ENCODE measurements at regions of chr17 and their contacts with region 1.

Region 1: GRCh38 chr17:30104575-30105339 is 11.9 kb upstream of the NSRP1 start:
- DNase-seq: peak; percentile 87 to 94 (median 94)
- H3K4me3 ChIP-seq: peak overlapping the region; percentile 20 to 87 (median 61)
- H3K27ac ChIP-seq: peak overlapping the region in 1 of 2 experiments; percentile 41
- H3K4me1 ChIP-seq: peaks cover 0 to 7% (median 3%) of the 10 kb centered on the region in 4 experiments
- H3K27me3 ChIP-seq: no peaks in the 10 kb centered on the region

Region 2: GRCh38 chr17:30093463-30094147 is 11.2 kb before region 1 on chr17:
- CTCF ChIA-PET with region 1: interaction called, 81 read pairs
- POLR2A ChIA-PET with region 1: no interaction called
- DNase-seq: peak; percentile 44 to 61 (median 49)
- H3K4me3 ChIP-seq: no peak overlapping the region
- H3K27ac ChIP-seq: no peak overlapping the region
- H3K4me1 ChIP-seq: peaks cover 0 to 4% (median under 1%) of the 10 kb centered on the region in 4 experiments
- H3K27me3 ChIP-seq: no peaks in the 10 kb centered on the region

Region 3: DNA sequence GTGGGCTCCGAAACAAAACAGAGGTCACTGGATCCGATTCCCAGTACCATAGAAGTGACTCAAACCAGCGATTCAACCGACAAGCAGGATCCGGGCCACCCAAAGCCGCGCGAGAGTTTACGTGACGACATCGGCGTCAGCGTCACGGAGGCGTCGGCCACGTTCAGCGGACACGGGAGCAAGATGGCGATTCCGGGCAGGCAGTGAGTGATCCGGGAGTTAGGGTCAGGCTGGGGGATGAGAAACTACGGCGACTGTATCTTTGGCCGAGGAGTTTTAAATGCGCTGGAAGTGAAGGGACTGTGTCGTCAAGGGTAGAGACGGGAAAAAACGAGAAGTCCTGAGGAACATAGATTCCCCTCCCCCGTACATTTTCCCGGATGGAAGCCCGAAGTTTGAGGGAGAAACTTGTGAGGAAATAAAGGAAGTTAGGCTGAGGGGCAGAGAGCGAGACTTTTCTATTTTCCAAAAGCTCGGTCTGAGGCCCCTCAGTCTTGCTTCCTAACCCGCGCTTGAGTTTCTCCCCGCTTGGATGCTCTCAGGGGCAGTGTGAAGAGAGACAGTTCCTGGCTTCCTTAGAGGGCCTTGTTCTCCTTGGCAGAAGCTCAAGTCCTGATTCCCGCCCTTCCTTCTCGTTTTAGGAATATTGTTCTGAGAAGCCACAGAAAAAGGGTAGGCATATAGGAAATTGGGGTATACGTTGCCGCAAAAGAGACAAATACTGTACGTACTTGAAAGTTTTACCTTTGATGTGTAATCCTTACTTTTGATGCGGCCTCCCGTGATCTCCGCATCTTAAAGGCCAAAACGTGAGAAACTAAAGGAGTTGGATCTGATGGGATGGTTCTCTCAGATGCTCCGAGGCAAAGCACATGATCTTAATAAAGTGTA is 12.1 kb after region 1 on chr17 and contains the start of gene NSRP1:
- CTCF ChIA-PET with region 1: interaction called, 18 read pairs
- POLR2A ChIA-PET with region 1: interaction called, 7 read pairs
- DNase-seq: peak; percentile 94 to 96 (median 96)
- H3K4me3 ChIP-seq: peak within 1 kb of the TSS; percentile 87 to 100 (median 93)
- H3K27ac ChIP-seq: peak within 1 kb of the TSS; percentile 99
- H3K4me1 ChIP-seq: peaks cover 5 to 18% (median 12%) of the 10 kb centered on the region in 4 experiments
- H3K27me3 ChIP-seq: no peaks in the 10 kb centered on the region

Region 4: DNA sequence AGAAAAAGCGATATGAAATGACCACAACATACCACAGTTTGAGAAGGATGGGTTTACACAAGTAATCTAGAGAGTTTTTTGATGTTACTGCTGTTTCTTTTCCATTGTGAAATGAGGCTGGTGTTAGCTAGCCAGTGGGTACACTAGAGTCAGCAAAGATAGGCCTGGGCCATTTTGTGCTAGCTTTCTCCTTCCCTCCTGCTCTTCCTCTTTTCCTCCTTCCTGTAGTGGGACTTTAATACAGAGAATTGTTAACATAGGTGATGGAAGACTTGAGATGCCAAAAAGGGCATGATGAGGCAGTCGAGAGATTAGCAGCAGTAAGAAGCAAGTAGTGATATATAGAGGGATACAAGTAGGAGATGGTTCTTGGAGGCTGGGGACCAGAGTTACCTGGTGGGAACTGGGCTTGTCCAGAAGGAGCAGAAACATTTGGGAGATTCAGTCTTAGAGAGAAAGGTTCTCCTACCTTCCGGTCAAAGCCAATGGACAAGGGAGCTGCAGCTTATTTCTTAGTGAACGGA is 19.6 kb after region 1 on chr17:
- CTCF ChIA-PET with region 1: interaction called, 27 read pairs
- POLR2A ChIA-PET with region 1: no interaction called
- DNase-seq: no peak
- H3K4me3 ChIP-seq: no peak overlapping the region
- H3K27ac ChIP-seq: peak overlapping the region in 1 of 2 experiments; percentile 43
- H3K4me1 ChIP-seq: no peaks in the 10 kb centered on the region
- H3K27me3 ChIP-seq: no peaks in the 10 kb centered on the region

Region 5: DNA sequence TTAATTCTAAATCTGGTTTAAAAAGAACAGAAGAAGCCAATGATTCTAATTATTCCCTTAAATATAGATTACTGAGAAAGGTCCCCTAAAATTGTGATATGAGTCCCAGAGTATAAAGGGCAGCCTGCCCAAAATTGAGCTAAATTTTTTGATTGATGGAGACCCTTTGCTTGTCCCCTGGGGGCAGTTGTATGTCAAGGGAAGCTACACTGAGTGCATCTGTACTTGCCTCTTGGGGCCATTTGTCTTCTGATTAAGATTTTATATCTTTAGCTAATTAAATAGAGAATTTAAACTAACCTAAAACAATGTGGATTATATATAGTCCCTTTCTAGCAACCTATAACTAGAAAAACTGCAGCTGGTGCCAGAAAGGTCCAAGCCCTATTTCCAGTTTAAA is 174.4 kb after region 1 on chr17:
- CTCF ChIA-PET with region 1: interaction called, 16 read pairs
- POLR2A ChIA-PET with region 1: no interaction called
- DNase-seq: no peak
- H3K4me3 ChIP-seq: no peak overlapping the region
- H3K27ac ChIP-seq: no peak overlapping the region
- H3K4me1 ChIP-seq: no peaks in the 10 kb centered on the region
- H3K27me3 ChIP-seq: no peaks in the 10 kb centered on the region

Region 6: DNA sequence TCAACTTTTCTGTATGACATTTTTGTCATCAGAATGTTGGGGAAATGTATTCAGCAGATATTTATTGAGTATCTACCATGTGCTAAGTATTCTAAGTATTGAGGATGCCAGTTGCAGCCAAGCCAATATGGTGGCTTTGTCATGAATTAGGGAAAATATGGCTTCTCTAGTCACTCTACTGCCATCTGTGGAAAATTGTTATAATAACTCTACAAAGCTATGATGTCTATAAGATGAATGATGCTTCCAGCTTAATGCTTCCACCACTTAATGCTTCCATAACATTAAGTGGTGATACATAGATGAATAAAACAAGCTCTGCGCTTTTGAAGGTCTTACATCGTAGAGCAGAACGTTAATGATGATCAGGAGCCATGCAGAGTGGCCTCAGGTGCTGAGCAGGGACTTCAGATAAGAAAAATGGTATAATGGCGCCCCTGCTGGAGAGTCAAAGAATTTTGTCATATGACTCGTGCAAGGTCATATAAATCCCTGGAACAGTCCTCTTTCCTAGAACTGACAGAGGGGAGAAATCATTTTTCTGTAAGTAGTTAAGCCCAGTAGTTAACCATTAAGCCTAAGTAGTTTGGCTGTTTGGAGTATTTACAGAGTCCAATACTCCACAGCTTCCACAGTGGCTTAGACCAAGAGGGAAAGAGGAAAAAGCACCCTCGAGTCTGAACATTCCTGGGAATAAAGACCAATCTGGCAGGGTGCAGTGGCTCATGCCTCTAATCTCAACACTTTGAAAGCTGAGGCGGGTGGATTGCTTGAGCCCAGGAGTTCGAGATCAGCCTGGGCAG is 231.8 kb after region 1 on chr17:
- CTCF ChIA-PET with region 1: interaction called, 11 read pairs
- POLR2A ChIA-PET with region 1: no interaction called
- DNase-seq: peak; percentile 64 to 72 (median 68)
- H3K4me3 ChIP-seq: no peak overlapping the region
- H3K27ac ChIP-seq: no peak overlapping the region
- H3K4me1 ChIP-seq: peaks cover 2 to 19% (median 9%) of the 10 kb centered on the region in 4 experiments
- H3K27me3 ChIP-seq: no peaks in the 10 kb centered on the region